BJ (cell line): ENCODE measurements at regions of chr2 and their contacts with region 1.

Region 1: GRCh38 chr2:241665727-241666440 is 20.7 kb downstream of the DTYMK start:
- DNase-seq: no peak
- H3K4me3 ChIP-seq: no peak overlapping the region
- H3K27me3 ChIP-seq: no peaks in the 10 kb centered on the region
- CTCF ChIP-seq: no peak

Region 2: DNA sequence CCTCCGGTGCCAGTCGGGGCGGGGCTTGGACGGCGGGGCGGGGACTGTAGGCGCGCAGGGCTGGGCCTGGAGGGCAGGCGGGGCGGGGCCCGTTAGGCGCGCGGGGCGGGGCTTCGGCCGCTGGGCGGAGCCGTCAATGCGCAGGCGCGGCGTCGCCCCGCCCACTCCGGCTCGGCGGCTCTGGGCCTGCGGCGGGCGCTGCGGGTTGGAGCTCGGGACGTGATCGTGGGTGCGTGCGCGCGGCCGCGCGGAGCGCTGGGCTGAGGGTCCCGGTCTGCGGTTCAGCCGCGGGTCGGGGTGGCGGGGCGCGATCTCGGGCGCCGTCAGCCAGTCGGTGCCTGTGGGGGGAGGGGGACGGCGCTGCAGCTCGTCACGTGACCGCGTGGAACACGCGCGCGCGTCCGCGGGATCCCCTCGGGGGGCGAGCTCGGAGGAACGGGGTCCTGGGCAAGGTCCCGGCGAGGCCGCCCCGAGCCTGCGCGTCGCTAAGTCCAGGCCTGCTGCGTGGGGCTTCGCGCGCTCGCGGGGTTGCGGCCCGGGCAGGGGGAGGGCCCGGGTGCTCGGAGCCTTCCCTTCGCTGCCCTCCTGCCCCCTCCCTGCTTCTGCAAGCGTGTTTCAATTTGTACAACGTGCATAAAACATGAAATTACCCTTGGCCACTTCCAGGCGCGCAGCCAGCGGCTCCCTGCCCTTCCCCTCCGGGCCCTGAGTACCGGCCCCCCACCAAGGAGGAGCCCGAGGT is 68.8 kb after region 1 on chr2 and contains the start of gene D2HGDH:
- CTCF ChIA-PET with region 1: interaction called, 11 read pairs
- POLR2A ChIA-PET with region 1: no interaction called
- DNase-seq: peak; percentile 11
- H3K4me3 ChIP-seq: peak within 1 kb of the TSS; percentile 82
- H3K27me3 ChIP-seq: no peaks in the 10 kb centered on the region
- CTCF ChIP-seq: no peak
- polyA plus RNA-seq, gene D2HGDH: 8.0 and 16.1 TPM in 2 replicates

Region 3: DNA sequence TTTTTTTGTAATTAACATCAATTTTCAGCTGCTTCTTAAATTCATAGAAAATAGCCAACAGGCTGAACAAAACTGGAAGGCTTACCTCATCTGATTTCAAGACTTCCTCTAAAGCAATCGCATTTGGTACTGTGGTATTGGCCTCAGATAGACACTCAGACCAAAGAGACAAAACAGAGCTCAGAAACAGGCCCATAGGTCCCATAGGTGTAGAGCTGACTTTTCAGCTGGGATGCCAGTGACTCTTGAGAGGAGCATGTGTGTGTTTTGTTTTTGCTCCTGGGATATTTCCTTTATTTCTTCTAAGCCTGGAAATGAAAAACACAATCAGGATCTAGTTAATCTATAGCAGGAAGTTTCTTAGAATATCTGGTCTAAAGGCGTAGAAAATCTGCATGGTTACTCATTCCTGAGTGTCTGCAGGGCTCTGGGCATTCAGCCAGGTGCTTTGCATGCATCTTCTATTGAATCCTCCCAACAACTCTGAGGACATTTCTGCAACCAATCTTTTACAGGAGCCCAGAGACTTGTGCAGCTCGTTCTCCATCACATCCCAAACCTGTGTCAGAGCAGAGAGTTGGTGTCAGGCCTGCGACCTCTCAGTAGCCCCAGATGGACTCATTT is 394.4 kb after region 1 on chr2:
- CTCF ChIA-PET with region 1: no interaction called
- POLR2A ChIA-PET with region 1: no interaction called
- DNase-seq: no peak
- H3K4me3 ChIP-seq: no peak overlapping the region
- H3K27me3 ChIP-seq: peaks cover 10% of the 10 kb centered on the region
- CTCF ChIP-seq: no peak